Sigmoid colon (tissue), 7 donors: ENCODE measurements at regions of chr6 and their contacts with region 1.

Region 1: DNA sequence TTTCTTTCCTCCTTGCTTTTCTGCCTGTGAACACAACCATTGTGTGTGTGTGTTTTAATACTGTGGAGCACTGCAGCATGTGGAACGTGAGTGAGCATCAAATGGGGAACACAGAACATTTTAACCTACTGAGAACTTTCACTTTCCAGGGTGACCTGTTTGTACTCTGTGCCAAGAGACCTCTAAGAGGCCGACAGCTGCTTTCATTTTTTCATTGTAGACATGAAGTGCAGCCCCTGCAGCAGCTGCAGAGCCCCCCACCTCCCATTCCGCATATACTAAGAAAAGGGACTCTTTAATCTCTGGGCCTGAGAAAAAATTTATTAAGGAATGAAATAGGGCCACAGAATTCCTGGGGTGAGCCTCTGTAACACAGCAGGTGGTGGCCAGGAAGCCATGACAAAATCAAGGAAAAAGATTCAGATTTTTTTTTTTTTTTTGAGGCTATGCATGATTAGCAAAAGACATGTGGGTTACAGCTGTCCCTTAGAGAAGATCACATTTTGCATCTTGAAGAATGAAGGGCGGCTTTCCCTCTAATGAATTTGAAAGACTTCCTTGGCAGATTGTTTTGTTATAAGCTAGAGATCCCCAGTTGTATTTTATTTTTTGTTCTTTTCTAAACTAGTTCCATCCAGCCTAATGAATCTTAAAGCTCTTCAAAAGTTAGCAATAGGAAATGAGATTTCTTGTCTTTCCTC is 503.4 kb downstream of the CD109 start:
- DNase-seq: no peak
- H3K4me3 ChIP-seq: no peak overlapping the region
- H3K27ac ChIP-seq: no peak overlapping the region
- H3K4me1 ChIP-seq: no peaks in the 10 kb centered on the region
- H3K27me3 ChIP-seq: no peaks in the 10 kb centered on the region
- CTCF ChIP-seq: no peak
- EP300 ChIP-seq: no peak
- POLR2A ChIP-seq: no peak

Region 2: DNA sequence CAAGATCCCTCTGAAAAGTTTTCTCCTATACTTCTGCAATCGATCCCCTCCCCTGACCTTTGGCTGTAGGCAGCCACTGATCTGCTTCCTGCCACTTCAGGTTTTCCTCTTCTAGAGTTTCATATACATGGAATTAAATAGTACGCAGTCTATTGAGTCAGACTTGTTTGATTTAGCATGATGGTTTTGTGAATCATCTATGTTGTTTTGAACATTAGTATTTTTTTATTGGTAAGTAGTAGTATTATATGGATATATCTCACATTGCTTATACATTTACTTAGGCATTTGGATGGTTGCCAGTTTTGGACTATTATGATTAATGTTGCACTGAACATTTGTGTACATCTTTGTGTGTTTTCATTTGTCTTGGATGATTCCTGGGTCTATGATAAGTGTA is 14.6 kb after region 1 on chr6:
- intact Hi-C with region 1: loop called (anchors 2 kb)
- DNase-seq: no peak
- H3K4me3 ChIP-seq: no peak overlapping the region
- H3K27ac ChIP-seq: no peak overlapping the region
- H3K4me1 ChIP-seq: peaks cover 0 to 2% (median 0%) of the 10 kb centered on the region in 4 donors
- H3K27me3 ChIP-seq: no peaks in the 10 kb centered on the region
- CTCF ChIP-seq: no peak
- EP300 ChIP-seq: no peak
- POLR2A ChIP-seq: no peak